Aorta (tissue), 5 donors: ENCODE measurements at regions of chr11 and their contacts with region 1.

Region 1: GRCh38 chr11:101127699-101128570 is 1.7 kb downstream of the PGR start:
- DNase-seq: peak; percentile 63 to 85
- ATAC-seq: peak; percentile 81
- H3K4me3 ChIP-seq: peak overlapping the region; percentile 74 to 97
- H3K27ac ChIP-seq: peak overlapping the region; percentile 75 to 92
- H3K4me1 ChIP-seq: no peaks in the 10 kb centered on the region
- H3K27me3 ChIP-seq: no peaks in the 10 kb centered on the region

Region 2: GRCh38 chr11:100991541-100991940 is 136.4 kb before region 1 on chr11:
- intact Hi-C with region 1: loop called (anchors 5 to 10 kb)
- DNase-seq: no peak
- ATAC-seq: no peak
- H3K4me3 ChIP-seq: no peak overlapping the region
- H3K27ac ChIP-seq: no peak overlapping the region
- H3K4me1 ChIP-seq: peaks cover 0 to 3% of the 10 kb centered on the region in 2 donors
- H3K27me3 ChIP-seq: no peaks in the 10 kb centered on the region

Region 3: DNA sequence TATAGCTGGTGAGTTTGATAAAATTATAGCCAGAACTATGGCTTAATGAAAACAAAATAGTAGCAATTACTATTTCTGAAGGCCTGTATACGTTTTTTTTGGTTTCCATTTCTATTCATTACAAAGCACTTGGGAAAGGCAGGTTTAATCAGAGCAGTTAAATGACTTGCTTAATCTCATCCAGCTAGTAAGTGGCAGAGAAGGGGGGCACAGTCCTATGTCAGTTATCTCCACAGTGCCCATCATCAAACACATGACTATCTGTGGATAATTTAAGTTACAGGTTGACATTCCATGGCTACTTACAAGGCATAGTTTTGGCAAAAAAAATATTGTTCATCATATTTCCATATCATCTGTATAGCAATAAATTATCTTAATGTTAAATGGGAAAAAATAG is 92.1 kb before region 1 on chr11:
- intact Hi-C with region 1: loop called in 1 of 2 experiments (anchors 5 kb)
- DNase-seq: no peak
- ATAC-seq: no peak
- H3K4me3 ChIP-seq: no peak overlapping the region
- H3K27ac ChIP-seq: peak overlapping the region in 1 of 2 donors; percentile 28
- H3K4me1 ChIP-seq: peaks cover 0 to 4% of the 10 kb centered on the region in 2 donors
- H3K27me3 ChIP-seq: no peaks in the 10 kb centered on the region

Region 4: DNA sequence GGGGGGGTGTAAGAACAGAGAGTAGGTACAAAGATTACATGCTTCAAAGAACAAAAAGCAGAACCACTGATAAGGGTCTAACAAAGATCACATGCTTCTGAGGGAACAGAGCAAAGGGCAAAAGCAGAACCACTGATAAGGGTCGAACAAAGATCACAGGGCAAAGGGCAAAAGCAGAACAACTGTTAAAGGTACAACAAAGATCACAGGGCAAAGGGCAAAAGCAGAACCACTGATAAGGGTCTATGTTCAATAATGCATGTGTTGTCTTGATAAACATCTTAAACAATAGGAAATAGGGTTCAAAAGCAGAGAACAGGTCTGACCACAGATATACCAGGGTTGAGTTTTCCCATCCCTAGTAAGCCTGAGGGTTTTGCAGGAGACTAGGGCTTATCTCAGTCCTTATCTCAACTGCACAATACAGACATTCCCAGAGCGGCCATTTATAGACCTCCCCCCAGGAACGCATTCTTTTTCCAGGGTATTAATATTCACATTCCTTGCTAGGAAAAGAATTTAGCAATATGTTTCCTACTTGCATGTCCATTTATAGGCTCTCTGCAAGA is 83.6 kb after region 1 on chr11:
- intact Hi-C with region 1: loop called in 1 of 2 experiments (anchors 5 kb)
- DNase-seq: no peak
- ATAC-seq: no peak
- H3K4me3 ChIP-seq: no peak overlapping the region
- H3K27ac ChIP-seq: no peak overlapping the region
- H3K4me1 ChIP-seq: no peaks in the 10 kb centered on the region
- H3K27me3 ChIP-seq: no peaks in the 10 kb centered on the region

Region 5: DNA sequence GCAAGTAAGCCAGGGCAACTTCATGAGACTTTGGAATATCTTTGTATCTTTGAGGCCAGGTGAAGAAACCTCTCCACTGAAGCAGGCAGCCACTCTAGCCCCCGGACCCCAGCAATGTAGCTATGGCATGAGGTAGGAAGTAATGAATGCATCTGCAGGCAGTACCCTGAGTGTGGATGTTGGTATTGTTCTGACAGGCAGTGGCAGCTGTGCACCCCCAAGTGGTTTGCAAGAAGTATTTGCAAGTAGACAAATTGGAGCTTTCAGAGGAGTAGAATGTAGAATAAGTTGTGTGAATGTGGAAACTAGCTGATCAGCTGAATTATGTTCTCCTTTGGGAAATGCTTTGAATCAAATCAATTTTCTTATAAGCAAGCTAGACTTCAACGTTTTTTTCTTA is 196.1 kb after region 1 on chr11:
- intact Hi-C with region 1: loop called in 1 of 2 experiments (anchors 10 kb)
- DNase-seq: no peak
- ATAC-seq: no peak
- H3K4me3 ChIP-seq: no peak overlapping the region
- H3K27ac ChIP-seq: no peak overlapping the region
- H3K4me1 ChIP-seq: peaks cover 0 to 1% of the 10 kb centered on the region in 2 donors
- H3K27me3 ChIP-seq: no peaks in the 10 kb centered on the region

Region 6: GRCh38 chr11:101341593-101341992 is 213.7 kb after region 1 on chr11:
- intact Hi-C with region 1: loop called in 1 of 2 experiments (anchors 2 kb)
- DNase-seq: no peak
- ATAC-seq: no peak
- H3K4me3 ChIP-seq: no peak overlapping the region
- H3K27ac ChIP-seq: peak overlapping the region; percentile 48 to 82
- H3K4me1 ChIP-seq: peaks cover 0 to 1% of the 10 kb centered on the region in 2 donors
- H3K27me3 ChIP-seq: no peaks in the 10 kb centered on the region

Region 7: DNA sequence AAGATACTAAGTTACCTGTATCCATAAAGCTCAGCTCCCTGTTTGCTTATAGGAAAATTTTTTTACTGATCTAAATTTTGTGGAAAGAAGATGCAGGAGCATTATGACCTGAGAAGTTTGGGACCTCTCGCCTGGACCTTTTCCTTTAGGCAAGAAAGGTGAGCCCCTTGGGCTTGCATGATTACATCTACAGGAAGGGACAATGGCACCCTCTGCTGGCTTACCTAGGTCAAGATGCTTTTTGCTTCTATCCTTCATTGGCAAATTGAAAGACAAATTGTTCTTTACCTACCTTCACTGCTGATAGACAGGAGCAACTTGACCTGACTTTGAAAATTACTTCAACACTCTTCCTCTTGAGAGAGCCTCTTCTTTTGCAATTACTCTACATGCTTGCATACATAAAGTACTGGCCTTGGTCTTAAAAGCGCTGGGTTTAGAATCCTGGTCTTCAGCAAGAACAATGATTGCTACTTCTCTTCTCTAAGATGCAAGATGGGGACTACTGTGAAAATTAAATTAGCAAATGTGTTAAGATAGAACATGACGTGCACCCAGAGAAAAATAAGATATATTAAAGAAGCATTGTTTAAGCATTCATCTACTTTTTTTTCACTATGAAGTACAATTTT is 308.7 kb after region 1 on chr11:
- intact Hi-C with region 1: loop called (anchors 5 kb)
- DNase-seq: peak in 1 of 2 donors; percentile 50
- ATAC-seq: no peak
- H3K4me3 ChIP-seq: no peak overlapping the region
- H3K27ac ChIP-seq: no peak overlapping the region
- H3K4me1 ChIP-seq: peaks cover 0 to 1% of the 10 kb centered on the region in 2 donors
- H3K27me3 ChIP-seq: no peaks in the 10 kb centered on the region